Posterior vena cava (tissue), 2 donors: ENCODE measurements at regions of chr14 and their contacts with region 1.

Region 1: GRCh38 chr14:50003213-50004031 is 110.5 kb downstream of the ARF6 start:
- DNase-seq: peak; percentile 96

Region 2: DNA sequence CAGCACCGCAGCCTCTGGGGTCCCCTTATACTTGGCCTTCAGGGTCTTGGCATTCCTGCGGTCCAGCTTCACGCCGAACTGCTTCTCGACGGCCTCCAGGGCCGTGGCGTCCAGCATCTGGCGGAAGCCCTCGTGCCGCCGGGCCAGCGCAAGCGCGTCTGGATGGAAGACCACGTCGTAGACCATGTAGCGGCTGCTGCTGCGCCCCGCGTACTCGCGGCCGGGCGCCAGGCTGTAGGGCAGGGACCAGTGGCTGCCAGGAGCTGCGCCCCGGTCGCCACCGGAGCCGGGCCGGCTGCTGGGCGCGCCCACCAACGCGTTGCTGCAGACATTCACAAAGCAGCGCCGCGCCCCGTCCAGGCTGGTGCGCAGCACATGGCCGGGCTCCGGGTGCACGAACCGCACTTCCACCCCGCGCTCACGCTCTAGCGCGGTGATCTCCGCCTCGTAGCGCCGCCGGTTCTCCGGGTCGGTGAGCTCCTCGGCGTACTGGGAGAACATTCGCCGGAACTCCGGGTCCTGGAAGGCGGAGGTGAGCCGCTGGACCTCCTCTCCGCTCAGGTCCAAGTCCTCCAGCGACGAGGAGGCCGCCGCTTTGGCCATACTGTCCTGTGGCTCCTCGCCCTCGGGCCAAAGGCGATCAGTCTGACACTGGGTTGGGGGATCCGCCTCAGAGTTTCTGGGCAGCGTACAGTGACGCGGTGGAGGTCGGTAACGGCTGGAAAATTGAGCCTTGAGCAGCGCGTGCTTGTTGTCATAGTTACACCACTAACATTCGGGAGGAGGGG is 368.7 kb before region 1 on chr14 and contains the start of gene DNAAF2:
- intact Hi-C with region 1: no loop called
- DNase-seq: peak; percentile 89
- total RNA-seq, gene DNAAF2: 4.3 to 6.1 TPM

Region 3: GRCh38 chr14:49867831-49868723 is 135.3 kb before region 1 on chr14:
- intact Hi-C with region 1: loop called in 1 of 2 experiments (anchors 10 kb)
- DNase-seq: peak; percentile 99

Region 4: DNA sequence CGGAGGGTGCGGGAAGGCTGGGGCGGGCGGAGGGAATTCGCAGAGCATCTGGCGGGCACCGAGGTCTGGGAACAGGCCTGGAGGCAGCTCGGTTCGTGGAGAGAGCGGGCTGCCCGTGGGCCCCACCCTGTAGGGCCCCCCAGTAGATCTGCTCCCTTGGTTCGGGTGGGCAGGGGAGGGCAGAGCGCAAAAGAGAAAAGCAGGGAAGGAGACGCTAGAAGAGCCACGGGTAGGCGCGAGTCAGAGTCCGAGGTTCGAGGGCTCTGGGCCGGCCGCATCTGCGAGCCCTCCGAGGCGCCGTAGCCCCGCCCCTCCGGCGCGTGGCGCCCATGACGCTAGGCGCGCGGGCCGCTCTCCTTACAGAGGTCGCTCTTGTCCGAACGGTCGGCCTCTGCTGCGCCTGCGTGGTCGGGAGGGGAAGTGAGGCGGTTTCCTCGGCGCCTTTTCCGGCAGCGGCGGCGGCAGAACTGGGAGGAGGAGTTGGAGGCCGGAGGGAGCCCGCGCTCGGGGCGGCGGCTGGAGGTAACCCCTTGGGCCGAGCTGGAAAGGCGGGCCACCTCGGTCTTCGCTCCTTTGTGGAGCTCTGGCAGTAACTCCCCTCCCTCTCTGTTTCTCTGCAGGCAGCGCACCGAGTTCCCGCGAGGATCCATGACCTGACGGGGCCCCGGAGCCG is 110.7 kb before region 1 on chr14 and contains the start of gene ARF6:
- intact Hi-C with region 1: loop called in 1 of 2 experiments (anchors 10 kb)
- DNase-seq: peak; percentile 100
- total RNA-seq, gene ARF6: 55.8 to 58.9 TPM

Region 5: DNA sequence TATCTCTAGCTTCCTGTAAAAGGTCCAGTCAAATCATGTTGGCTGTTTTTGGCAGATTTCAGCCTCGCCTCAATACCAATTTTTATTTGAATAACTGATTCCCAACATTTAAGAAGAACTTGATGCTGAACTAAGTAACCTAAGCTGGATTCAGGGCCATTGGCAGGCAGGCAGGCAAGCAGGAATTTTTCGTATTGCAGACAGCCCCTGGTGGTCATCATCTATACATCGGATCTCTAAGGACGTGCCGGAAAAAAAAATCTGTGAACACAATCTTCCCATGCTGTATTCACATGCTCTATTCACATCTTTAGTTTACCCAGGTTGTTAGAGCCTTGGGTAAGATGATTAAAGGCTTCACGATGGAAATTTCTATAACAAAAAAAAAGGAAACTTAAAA is 105.9 kb after region 1 on chr14:
- intact Hi-C with region 1: loop called in 1 of 2 experiments (anchors 10 kb)
- DNase-seq: no peak